Head of caudate nucleus (tissue), 42 donors: ENCODE measurements at regions of chr1 and their contacts with region 1.

Region 1: DNA sequence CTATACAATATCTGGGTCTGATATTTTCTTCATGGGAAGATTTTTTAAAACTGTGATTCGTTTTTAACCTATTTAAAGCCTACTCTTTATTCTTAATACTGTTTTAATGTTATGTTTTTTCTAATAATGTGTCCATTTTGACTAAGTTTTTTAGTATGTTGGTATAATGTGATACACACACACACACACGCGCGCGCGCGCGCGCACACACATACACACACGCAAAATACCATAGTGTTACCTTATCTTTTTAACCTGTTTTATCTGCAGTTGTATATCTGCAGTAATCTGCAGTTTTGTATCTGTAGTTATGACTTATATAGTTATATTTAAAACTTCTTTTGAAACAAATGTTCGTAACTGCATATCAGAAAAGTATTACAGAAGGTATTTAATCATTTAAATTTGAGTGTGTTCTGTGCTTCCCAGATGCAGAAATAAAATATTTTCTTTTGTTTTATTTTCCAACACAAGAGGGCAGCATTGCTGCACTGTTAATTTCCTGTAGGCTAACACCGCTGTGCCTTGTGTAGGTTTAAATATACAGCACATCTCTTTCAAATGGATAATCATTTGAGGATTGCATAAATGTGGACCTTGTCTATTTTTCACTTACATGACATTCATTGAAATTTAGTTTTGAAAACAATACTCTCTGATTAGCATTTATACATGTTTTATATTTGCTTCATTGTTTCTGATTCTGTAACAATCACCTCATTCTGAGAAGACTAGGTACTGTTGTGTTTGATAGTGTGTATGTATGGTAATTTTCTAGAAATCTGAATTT is 166.1 kb downstream of the PDE4B start:
- DNase-seq: peak in 9 of 42 donors; percentile 30 to 78 (median 44)

Region 2: DNA sequence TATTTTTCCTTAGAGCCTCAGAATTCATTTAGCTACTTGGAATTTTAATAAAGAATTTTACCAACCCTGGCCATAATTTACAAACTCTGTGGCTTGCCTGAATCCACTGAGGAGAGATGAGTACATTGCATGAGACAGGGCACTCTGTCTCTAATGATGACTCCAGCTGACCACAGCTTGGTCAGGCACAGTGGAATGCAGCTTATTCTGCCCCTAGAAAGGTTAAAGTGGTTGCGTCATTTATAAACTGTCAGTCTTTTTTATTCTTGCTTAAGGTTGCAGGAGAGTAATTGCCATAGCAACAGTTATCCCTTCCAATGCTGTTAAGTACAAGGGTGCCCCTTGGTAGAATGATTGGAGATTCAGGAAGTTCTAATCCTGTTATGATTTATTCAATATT is 137.8 kb before region 1 on chr1:
- intact Hi-C with region 1: no loop called
- DNase-seq: no peak

Region 3: GRCh38 chr1:65894738-65895605 is 63.8 kb before region 1 on chr1:
- intact Hi-C with region 1: no loop called
- DNase-seq: no peak

Region 4: GRCh38 chr1:66242646-66243547 is 284.1 kb after region 1 on chr1:
- intact Hi-C with region 1: loop called (anchors 2 kb)
- DNase-seq: peak; percentile 83 to 97 (median 92)

Region 5: GRCh38 chr1:66446261-66447001 is 487.7 kb after region 1 on chr1:
- intact Hi-C with region 1: loop called (anchors 5 kb)
- DNase-seq: peak in 22 of 42 donors; percentile 6 to 79 (median 38)

Region 6: GRCh38 chr1:66732407-66733166 is 773.8 kb after region 1 on chr1:
- intact Hi-C with region 1: loop called (anchors 10 kb)
- DNase-seq: no peak